ENCODE measurements at regions of chr5 and their contacts with region 1.

Region 1: GRCh38 chr5:59039296-59040023 is 456.6 kb downstream of the RAB3C start:
- DNase-seq: peak; percentile 21 to 92 (median 53)

Region 2: DNA sequence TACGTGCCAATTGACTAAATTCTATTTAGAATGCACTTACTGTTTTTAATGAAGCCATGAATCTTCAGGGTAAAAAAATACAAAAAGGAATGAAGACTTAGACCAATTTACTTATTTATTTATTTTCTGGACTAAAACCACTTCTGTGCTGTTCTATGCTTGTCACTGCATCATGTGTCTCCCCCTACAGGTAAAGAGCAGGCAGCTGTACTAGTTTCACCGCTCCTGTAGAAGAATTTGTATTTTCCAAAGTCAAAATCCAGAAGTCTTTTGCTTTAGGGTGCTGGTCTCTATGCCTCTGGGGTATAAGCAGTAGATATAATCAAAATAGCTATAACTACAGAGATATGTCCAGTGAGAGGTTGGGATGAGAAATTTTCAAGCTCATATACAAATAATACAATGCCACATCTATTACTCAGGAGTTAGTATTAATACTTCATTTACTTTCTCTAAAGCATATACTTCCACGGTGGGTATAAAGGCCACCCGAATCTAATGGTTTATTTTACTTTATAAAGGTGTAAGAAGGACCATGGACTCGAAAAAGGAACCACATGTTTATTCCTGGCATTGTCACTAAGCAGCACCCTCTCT is 134.9 kb after region 1 on chr5:
- intact Hi-C with region 1: loop called (anchors 5 kb)
- DNase-seq: no peak

Measured in posterior cingulate gyrus (tissue), 11 donors.